Lower leg skin (tissue), 4 donors: ENCODE measurements at regions of chr12 and their contacts with region 1.

Region 1: DNA sequence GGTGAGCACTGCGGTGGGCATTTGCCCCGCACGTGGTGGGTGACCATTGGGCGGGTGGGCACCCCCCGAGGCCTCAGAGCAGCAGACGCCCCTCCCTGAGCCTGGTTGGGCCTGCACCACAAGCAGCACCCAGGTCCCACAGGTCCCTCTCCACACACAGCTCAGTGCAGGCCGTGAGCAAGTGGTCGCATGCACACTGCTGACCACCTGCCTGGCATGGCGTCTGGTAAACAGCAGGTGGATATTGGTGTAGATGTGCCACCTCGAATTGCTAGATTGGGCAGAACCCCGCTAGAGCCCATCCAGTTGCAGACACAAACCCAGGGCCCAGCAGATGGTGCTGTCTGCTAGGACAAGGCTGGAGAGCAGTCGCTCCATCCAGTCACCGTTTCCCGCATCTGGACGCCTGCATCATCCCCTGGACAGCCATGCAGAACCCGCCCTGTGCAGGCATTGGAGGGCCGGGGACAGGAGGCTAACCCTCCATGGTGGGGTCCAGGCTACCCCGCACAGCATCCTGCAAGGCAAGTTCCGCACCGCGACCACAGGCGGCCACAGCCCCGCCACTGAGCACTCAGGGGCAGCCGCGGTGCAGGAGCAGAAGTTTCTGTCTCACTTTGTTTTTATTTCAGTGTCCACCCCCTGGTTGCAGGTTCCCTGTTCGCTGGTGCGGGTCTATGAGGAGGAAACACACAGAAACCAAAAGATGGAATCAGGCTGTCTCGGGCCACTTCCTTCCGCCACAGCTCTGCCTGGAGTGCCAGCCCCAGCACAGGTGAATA is 45.6 kb upstream of the RIMBP2 start:
- DNase-seq: no peak
- H3K4me3 ChIP-seq: no peak overlapping the region
- CTCF ChIP-seq: no peak
- POLR2A ChIP-seq: no peak

Region 2: GRCh38 chr12:130818635-130819576 is 57.2 kb after region 1 on chr12:
- intact Hi-C with region 1: loop called (anchors 10 kb)
- DNase-seq: peak; percentile 33 to 92
- H3K4me3 ChIP-seq: peak overlapping the region; percentile 17
- CTCF ChIP-seq: no peak
- POLR2A ChIP-seq: no peak